Activated B cell treated with CpG ODN at 0.5 μM for 24 hours (primary cell): ENCODE measurements at regions of chr15 and their contacts with region 1.

Region 1: DNA sequence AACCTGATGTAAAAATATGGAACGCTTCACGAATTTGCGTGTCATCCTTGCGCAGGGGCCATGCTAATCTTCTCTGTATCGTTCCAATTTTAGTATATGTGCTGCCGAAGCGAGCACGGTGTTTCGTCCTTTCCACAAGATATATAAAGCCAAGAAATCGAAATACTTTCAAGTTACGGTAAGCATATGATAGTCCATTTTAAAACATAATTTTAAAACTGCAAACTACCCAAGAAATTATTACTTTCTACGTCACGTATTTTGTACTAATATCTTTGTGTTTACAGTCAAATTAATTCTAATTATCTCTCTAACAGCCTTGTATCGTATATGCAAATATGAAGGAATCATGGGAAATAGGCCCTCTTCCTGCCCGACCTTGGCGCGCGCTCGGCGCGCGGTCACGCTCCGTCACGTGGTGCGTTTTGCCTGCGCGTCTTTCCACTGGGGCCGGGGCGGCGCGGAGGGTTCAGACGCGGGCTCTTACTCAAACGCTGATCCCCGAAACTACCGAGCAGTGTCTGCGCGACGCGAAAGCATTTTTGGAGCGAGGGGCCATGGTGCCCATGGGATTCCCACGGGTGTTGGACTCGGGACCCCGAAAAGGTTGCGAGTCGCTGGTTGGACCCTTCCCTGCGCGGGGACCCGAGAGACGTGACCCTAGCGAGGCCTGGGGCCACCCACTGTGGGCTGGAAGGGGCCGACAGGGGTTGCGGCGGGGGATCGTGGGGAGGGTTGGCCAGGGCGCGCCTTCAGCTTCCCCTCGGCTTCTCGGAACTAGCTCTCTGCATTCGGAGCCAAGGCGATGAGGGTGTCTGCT is at the start of gene RNU6-1:
- DNase-seq: peak; percentile 93
- ATAC-seq: peak; percentile 82
- H3K4me3 Mint-ChIP-seq: peak within 1 kb of the TSS; percentile 95
- H3K27ac Mint-ChIP-seq: peak within 1 kb of the TSS; percentile 93
- H3K4me1 Mint-ChIP-seq: peaks cover 40% of the 10 kb centered on the region
- H3K27me3 Mint-ChIP-seq: peaks cover 16% of the 10 kb centered on the region
- CTCF ChIP-seq: no peak
- total RNA-seq, gene RNU6-1: not detected in 2 replicates

Region 2: GRCh38 chr15:67065444-67066093 is 774.6 kb before region 1 on chr15 and contains the start of gene SMAD3:
- CTCF ChIA-PET with region 1: no interaction called
- POLR2A ChIA-PET with region 1: no interaction called
- intact Hi-C with region 1: loop called (anchors 5 kb)
- DNase-seq: peak; percentile 74
- ATAC-seq: peak; percentile 71
- H3K4me3 Mint-ChIP-seq: peak within 1 kb of the TSS; percentile 98
- H3K27ac Mint-ChIP-seq: peak within 1 kb of the TSS; percentile 95
- H3K4me1 Mint-ChIP-seq: peaks cover 47% of the 10 kb centered on the region
- H3K27me3 Mint-ChIP-seq: no peaks in the 10 kb centered on the region
- CTCF ChIP-seq: no peak
- total RNA-seq, gene SMAD3: 85.9 and 118 TPM in 2 replicates

Region 3: GRCh38 chr15:67456677-67457529 is 383.2 kb before region 1 on chr15:
- CTCF ChIA-PET with region 1: interaction called, 29 read pairs
- POLR2A ChIA-PET with region 1: interaction called, 3 read pairs
- intact Hi-C with region 1: loop called (anchors 1 kb)
- DNase-seq: peak; percentile 70
- ATAC-seq: peak; percentile 97
- H3K4me3 Mint-ChIP-seq: no peak overlapping the region
- H3K27ac Mint-ChIP-seq: no peak overlapping the region
- H3K4me1 Mint-ChIP-seq: no peaks in the 10 kb centered on the region
- H3K27me3 Mint-ChIP-seq: peaks cover 4% of the 10 kb centered on the region
- CTCF ChIP-seq: peak; percentile 85

Region 4: GRCh38 chr15:67542420-67543347 is 297.5 kb before region 1 on chr15 and contains the start of gene MAP2K5:
- CTCF ChIA-PET with region 1: no interaction called
- POLR2A ChIA-PET with region 1: interaction called, 4 read pairs
- intact Hi-C with region 1: loop called (anchors 2 kb)
- DNase-seq: peak; percentile 76
- ATAC-seq: peak; percentile 73
- H3K4me3 Mint-ChIP-seq: peak within 1 kb of the TSS; percentile 94
- H3K27ac Mint-ChIP-seq: peak within 1 kb of the TSS; percentile 94
- H3K4me1 Mint-ChIP-seq: peaks cover 56% of the 10 kb centered on the region
- H3K27me3 Mint-ChIP-seq: peaks cover 5% of the 10 kb centered on the region
- CTCF ChIP-seq: no peak
- total RNA-seq, gene MAP2K5: 18.9 and 26.7 TPM in 2 replicates

Region 5: DNA sequence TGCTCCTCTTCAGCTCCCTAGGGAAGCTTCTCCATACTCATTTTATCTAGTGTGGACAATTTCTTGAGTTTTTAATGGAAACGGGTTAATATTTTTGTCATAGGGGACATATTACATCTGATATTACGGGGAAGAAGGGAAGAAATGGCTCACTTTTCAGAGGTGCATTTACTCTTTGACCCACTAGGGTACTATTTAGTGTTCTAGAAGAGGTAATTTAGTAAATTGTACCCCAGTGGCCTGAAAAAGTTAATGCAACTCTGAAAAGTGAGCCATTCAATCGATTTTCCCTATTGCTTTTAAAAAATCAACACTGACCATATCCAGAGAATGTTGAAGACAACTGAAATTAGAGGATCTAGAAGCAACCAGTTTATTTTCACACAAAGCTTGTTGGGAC is 226.4 kb before region 1 on chr15:
- CTCF ChIA-PET with region 1: no interaction called
- POLR2A ChIA-PET with region 1: no interaction called
- intact Hi-C with region 1: no loop called
- DNase-seq: no peak
- ATAC-seq: no peak
- H3K4me3 Mint-ChIP-seq: no peak overlapping the region
- H3K27ac Mint-ChIP-seq: no peak overlapping the region
- H3K4me1 Mint-ChIP-seq: no peaks in the 10 kb centered on the region
- H3K27me3 Mint-ChIP-seq: no peaks in the 10 kb centered on the region
- CTCF ChIP-seq: no peak

Region 6: DNA sequence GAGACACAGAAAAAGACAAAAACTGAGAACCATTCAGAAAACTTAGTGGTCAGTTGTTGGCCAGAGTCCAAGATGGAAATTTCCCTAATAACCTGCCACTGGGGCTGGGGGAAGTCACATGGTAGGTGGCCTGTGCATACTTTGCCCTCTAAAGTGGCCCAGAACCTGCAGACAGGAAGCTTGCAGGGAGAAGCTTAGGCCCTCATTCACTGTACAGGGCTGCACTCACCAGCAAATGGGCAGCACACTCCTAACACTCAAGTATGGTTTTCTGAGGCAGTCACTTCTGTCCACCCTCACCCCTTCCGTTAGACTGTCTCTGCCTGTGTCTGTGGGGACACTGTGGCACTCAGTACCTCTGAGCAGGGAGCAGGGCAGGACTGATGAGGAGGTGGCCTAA is 14.2 kb after region 1 on chr15:
- CTCF ChIA-PET with region 1: no interaction called
- POLR2A ChIA-PET with region 1: interaction called, 16 read pairs
- intact Hi-C with region 1: no loop called
- DNase-seq: no peak
- ATAC-seq: no peak
- H3K4me3 Mint-ChIP-seq: no peak overlapping the region
- H3K27ac Mint-ChIP-seq: no peak overlapping the region
- H3K4me1 Mint-ChIP-seq: peaks cover 24% of the 10 kb centered on the region
- H3K27me3 Mint-ChIP-seq: no peaks in the 10 kb centered on the region
- CTCF ChIP-seq: no peak

Region 7: GRCh38 chr15:67892559-67893377 is 52.6 kb after region 1 on chr15:
- CTCF ChIA-PET with region 1: no interaction called
- POLR2A ChIA-PET with region 1: no interaction called
- intact Hi-C with region 1: no loop called
- DNase-seq: no peak
- ATAC-seq: no peak
- H3K4me3 Mint-ChIP-seq: no peak overlapping the region
- H3K27ac Mint-ChIP-seq: no peak overlapping the region
- H3K4me1 Mint-ChIP-seq: no peaks in the 10 kb centered on the region
- H3K27me3 Mint-ChIP-seq: peaks cover 10% of the 10 kb centered on the region
- CTCF ChIP-seq: no peak

Region 8: DNA sequence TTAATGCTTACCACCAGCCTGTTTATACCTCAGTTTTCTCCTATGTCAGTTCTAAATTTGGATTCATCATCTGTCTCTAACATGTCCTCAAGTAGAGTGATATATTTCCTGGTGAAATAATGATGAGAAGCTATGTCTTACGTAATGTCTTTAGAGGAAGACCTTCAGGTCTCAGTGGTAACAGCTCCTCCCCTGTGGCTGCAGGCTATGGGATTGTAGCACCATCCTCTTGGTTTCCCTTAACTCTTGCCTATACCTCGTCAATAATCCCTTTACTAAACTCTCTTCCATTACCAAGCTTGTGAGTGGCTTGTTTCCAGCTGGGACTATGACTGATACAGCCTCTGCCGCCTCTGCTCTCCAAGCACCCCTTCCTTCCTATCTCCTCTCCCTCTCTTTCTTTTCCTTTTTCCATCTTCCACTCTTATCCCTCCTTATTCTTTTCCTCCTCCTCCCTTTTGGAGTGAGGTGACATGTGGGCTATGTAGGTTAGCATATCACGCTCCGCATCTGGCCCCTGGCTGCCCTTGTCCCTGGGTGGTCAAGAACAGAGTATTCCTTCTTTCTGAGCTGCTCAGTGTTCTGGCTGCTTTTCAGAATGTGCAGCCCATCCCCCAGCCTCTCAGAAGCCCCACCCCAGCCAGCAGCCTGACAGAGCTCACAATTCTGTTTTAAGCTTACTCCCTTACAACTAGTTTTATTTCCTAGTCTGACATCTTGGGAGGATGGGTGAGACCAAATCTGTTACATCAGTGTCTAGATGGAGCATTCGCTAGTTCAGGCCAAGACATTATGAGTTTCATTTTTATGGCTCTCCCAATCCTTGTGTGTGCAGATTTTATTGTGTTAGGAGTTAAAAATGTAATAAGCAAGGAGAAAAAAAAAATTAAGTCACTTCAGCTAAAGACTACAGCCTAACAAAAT is 74.7 kb after region 1 on chr15:
- CTCF ChIA-PET with region 1: no interaction called
- POLR2A ChIA-PET with region 1: no interaction called
- intact Hi-C with region 1: no loop called
- DNase-seq: no peak
- ATAC-seq: no peak
- H3K4me3 Mint-ChIP-seq: no peak overlapping the region
- H3K27ac Mint-ChIP-seq: no peak overlapping the region
- H3K4me1 Mint-ChIP-seq: no peaks in the 10 kb centered on the region
- H3K27me3 Mint-ChIP-seq: no peaks in the 10 kb centered on the region
- CTCF ChIP-seq: no peak

Region 9: DNA sequence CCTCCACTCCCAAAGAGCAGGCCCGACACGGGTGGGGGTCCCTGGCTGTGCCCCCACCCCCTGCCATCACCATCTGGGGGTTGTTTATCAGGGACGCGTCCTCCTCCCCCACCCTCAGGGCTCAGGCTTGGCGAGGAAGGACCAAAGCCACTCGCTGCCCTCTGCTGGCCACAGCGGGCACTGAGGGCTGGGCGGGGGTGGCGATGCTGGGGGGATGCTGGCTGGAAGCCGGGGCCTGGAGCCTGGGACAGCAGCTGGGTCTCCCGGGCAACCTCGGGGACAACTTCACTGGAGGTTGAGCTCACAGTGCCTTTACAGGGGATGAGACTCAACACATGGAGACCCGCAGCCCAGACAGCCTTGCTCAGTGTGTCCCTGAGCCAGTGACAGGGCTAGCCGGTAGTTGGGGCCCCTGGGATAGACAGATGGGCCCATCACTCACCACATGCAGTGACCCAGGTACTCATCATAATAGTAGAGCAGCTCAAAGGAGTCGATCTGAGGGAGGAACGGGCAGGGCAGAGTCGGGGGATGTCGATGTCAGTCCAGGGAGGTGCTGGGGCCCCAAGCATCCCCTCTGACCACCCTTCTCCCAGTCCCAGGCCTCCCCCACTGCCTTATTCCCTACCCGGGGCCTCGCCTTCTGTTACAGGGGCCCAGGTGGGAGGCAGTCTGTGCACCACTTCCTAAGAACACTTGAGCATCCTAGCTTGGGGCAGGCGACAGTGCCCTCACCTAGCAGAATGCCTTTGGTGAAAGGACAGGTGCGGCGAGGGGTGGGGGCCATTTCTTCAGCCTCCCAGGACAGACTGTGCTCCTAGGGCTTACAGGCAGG is 370.9 kb after region 1 on chr15:
- CTCF ChIA-PET with region 1: no interaction called
- POLR2A ChIA-PET with region 1: no interaction called
- intact Hi-C with region 1: loop called (anchors 1 kb)
- DNase-seq: peak; percentile 49
- ATAC-seq: peak; percentile 49
- H3K4me3 Mint-ChIP-seq: no peak overlapping the region
- H3K27ac Mint-ChIP-seq: no peak overlapping the region
- H3K4me1 Mint-ChIP-seq: peaks cover 32% of the 10 kb centered on the region
- H3K27me3 Mint-ChIP-seq: no peaks in the 10 kb centered on the region
- CTCF ChIP-seq: no peak

Region 10: GRCh38 chr15:68820295-68821189 is 980.4 kb after region 1 on chr15 and contains the start of gene ANP32A:
- CTCF ChIA-PET with region 1: no interaction called
- POLR2A ChIA-PET with region 1: no interaction called
- intact Hi-C with region 1: loop called (anchors 10 kb)
- DNase-seq: peak; percentile 99
- ATAC-seq: peak; percentile 72
- H3K4me3 Mint-ChIP-seq: peak within 1 kb of the TSS; percentile 97
- H3K27ac Mint-ChIP-seq: peak within 1 kb of the TSS; percentile 97
- H3K4me1 Mint-ChIP-seq: peaks cover 32% of the 10 kb centered on the region
- H3K27me3 Mint-ChIP-seq: no peaks in the 10 kb centered on the region
- CTCF ChIP-seq: no peak
- total RNA-seq, gene ANP32A: 199 and 218 TPM in 2 replicates